CD4-positive, alpha-beta T cell (primary cell): ENCODE measurements at regions of chr16 and their contacts with region 1.

Region 1: DNA sequence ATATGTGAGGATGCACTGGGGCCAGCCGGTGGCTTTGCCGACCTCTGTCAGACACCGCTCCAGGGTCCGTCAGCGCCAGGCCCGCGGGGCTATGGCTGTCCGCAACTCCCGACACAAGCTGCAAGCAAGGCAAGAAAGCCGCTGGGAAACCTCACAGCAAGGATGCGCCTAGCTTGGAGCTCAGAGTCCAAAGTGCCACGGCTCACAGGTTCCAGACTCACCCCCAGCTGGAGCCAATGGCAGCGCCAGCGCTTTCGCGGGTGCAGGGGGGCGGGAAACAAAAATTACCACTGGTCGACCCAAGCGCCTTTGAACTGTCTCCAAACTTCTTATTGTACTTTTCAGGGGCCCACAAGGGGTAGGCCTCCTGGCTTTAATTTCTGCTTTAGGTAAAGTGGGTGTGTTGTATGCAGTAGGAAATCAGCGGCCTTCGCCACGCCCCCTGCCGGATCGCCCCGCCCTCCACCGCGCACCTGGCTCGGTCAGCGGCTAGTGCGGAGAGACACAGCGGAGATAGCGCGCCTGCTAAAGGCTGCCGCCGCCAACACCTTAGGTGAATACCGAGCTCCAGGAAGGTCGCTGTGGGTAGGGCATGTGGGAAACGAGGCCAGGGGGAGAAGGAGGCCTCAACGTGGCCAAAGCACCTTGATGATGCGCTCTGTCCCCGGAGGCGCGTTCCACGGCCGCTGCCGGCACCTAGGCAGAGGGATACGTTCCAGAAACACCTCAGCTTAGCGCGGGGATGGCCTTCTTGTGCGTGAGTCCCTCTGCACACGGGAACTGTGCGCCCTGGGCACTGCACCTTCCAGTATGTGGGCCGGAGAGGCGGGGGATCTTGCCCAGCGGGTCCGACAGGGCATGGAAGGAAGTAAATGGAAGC is 61.0 kb upstream of the RBL2 start:
- DNase-seq: peak; percentile 65 to 94 (median 82)
- ATAC-seq: peak; percentile 96
- H3K4me3 ChIP-seq: peak overlapping the region; percentile 72
- H3K4me3 Mint-ChIP-seq: no peak overlapping the region
- H3K27ac ChIP-seq: no peak overlapping the region
- H3K27ac Mint-ChIP-seq: peak overlapping the region; percentile 59
- H3K4me1 ChIP-seq: peaks cover 13% of the 10 kb centered on the region
- H3K4me1 Mint-ChIP-seq: peaks cover 35% of the 10 kb centered on the region
- H3K27me3 ChIP-seq: no peaks in the 10 kb centered on the region
- H3K27me3 Mint-ChIP-seq: no peaks in the 10 kb centered on the region
- CTCF ChIP-seq: no peak

Region 2: GRCh38 chr16:53358884-53359283 is 14.3 kb before region 1 on chr16:
- CTCF ChIA-PET with region 1: no interaction called
- POLR2A ChIA-PET with region 1: no interaction called
- intact Hi-C with region 1: no loop called
- DNase-seq: no peak
- ATAC-seq: no peak
- H3K4me3 ChIP-seq: no peak overlapping the region
- H3K4me3 Mint-ChIP-seq: no peak overlapping the region
- H3K27ac ChIP-seq: no peak overlapping the region
- H3K27ac Mint-ChIP-seq: no peak overlapping the region
- H3K4me1 ChIP-seq: no peaks in the 10 kb centered on the region
- H3K4me1 Mint-ChIP-seq: no peaks in the 10 kb centered on the region
- H3K27me3 ChIP-seq: no peaks in the 10 kb centered on the region
- H3K27me3 Mint-ChIP-seq: peaks cover 9% of the 10 kb centered on the region
- CTCF ChIP-seq: no peak

Region 3: GRCh38 chr16:53429221-53429943 is 56.1 kb after region 1 on chr16:
- CTCF ChIA-PET with region 1: no interaction called
- POLR2A ChIA-PET with region 1: interaction called, 4 read pairs
- intact Hi-C with region 1: loop called (anchors 2 kb)
- DNase-seq: no peak
- ATAC-seq: no peak
- H3K4me3 ChIP-seq: no peak overlapping the region
- H3K4me3 Mint-ChIP-seq: no peak overlapping the region
- H3K27ac ChIP-seq: no peak overlapping the region
- H3K27ac Mint-ChIP-seq: no peak overlapping the region
- H3K4me1 ChIP-seq: peaks cover 8% of the 10 kb centered on the region
- H3K4me1 Mint-ChIP-seq: peaks cover 9% of the 10 kb centered on the region
- H3K27me3 ChIP-seq: no peaks in the 10 kb centered on the region
- H3K27me3 Mint-ChIP-seq: no peaks in the 10 kb centered on the region
- CTCF ChIP-seq: no peak

Region 4: DNA sequence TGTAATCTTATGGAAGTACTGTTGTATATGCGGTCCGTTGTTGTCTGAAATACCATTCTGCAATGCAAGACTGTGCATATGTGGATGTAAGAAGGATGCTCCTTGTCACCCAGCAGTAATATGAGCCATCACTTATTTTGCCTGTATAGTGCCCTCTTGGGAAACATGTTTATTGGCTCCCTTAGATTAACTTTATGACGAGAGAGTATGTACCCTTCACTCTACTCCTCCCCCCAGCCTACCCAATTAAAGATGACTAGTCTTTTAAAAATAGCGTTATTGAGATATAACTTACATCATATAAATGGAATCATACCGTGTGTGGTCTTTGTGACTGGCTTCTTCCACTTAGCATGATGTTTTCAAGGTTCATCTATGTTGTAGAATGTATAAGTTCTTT is 364.3 kb after region 1 on chr16:
- CTCF ChIA-PET with region 1: no interaction called
- POLR2A ChIA-PET with region 1: no interaction called
- intact Hi-C with region 1: no loop called
- DNase-seq: no peak
- ATAC-seq: no peak
- H3K4me3 ChIP-seq: no peak overlapping the region
- H3K4me3 Mint-ChIP-seq: no peak overlapping the region
- H3K27ac ChIP-seq: no peak overlapping the region
- H3K27ac Mint-ChIP-seq: no peak overlapping the region
- H3K4me1 ChIP-seq: no peaks in the 10 kb centered on the region
- H3K4me1 Mint-ChIP-seq: peaks cover 36% of the 10 kb centered on the region
- H3K27me3 ChIP-seq: no peaks in the 10 kb centered on the region
- H3K27me3 Mint-ChIP-seq: no peaks in the 10 kb centered on the region
- CTCF ChIP-seq: no peak